ENCODE measurements at regions of chr6 and their contacts with region 1.

Region 1: DNA sequence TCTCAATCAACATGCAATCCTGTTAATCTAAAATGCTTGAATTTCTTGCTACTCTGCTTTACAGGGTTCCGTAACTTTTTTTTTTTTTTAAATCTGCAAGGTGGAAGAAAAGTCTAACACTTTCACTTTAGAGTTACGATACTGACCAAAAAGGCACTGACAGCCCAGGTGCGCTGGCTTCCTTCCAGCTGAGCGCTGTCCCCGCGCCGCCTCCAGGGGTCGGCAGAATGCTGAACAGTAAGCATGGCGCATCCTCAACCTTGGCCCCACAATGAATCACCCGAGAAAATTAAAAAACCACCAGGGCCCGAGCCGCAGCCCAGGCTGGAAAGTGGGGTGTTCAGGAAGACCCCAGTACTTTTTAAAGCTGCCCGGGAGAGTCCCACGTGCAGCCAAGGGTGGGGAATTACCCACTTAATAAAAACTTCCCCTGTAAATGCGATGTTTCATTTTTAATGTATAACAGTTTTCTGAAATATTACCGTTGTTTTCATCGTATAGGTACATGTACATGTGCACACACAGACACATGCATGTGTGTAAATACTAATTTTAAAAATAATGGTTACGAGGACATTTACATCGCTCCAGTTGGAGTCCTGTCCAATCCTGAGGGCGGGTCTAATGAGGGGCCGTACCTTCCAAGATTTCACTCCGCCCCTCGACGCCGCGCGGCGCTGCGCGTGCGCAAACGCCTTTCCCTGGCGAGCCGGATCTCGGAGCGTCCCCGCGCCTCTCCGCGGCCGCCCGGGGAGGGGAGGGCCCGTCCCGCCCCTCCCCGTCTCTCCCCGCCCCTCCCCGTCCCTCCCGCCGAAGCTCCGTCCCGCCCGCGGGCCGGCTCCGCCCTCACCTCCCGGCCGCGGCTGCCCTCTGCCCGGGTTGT is at the start of gene GINM1:
- DNase-seq: peak; percentile 93 to 97
- ATAC-seq: peak; percentile 96 to 98 (median 98)
- H3K4me3 ChIP-seq: peak within 1 kb of the TSS; percentile 80 to 100 (median 98)
- H3K27ac ChIP-seq: peak within 1 kb of the TSS; percentile 44 to 97 (median 95)
- H3K4me1 ChIP-seq: peaks cover 0 to 35% (median 20%) of the 10 kb centered on the region in 9 donors
- H3K27me3 ChIP-seq: no peaks in the 10 kb centered on the region
- CTCF ChIP-seq: peak in 8 of 9 donors; percentile 41 to 81 (median 64)
- total RNA-seq, gene GINM1: 48.6 to 59.3 (median 55.7) TPM

Region 2: DNA sequence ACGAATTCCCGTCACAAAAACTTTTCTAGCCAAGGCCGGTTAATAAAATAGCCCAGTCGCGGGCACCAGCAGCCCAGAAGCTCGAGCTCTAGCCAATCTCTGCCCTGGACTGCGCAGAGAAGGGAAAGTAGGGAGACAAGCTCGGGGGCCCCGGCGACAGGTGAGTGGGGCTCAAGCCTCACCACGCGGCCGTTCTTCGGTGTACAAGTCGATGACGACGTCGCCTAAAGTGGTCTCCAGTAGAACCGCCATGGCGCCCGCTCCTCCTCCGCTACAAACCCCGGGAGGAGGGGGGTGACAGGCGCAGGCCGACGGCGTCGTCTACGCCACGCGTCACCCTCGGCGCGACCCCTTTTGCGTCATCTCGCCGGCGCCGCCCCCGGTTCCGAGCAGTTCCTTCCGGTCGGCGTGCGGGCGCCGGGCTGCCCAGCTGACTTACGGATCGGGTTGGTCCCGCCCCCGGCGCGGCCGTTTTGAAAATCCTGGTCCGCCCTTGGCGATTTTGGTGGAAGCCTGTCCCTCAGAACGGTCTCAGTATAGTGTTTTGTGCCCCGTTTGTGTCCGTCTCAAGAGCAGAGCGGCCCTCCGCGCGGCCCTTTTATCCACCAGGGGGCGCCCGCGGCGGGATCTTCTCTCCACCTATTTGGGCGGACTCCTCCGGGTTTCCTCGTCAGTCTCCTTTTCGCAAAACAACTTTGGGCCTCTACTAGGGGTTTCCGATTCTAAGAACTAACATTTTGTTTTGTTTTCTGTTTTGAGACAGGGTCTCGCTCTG is 19.8 kb before region 1 on chr6 and contains the start of gene PPIL4:
- intact Hi-C with region 1: loop called in 1 of 10 experiments (anchors 1 kb)
- DNase-seq: peak; percentile 96 to 98
- ATAC-seq: peak; percentile 98 to 99 (median 99)
- H3K4me3 ChIP-seq: peak within 1 kb of the TSS; percentile 65 to 98 (median 86)
- H3K27ac ChIP-seq: peak within 1 kb of the TSS; percentile 84 to 99 (median 95)
- H3K4me1 ChIP-seq: peaks cover 6 to 39% (median 33%) of the 10 kb centered on the region in 9 donors
- H3K27me3 ChIP-seq: peaks cover 0 to 3% (median 0%) of the 10 kb centered on the region in 7 donors
- CTCF ChIP-seq: peak; percentile 66 to 91 (median 82)
- total RNA-seq, gene PPIL4: 15.2 to 22.0 (median 18.1) TPM

Region 3: GRCh38 chr6:149648148-149649145 is 82.7 kb after region 1 on chr6 and contains the start of gene KATNA1:
- intact Hi-C with region 1: loop called in 1 of 10 experiments (anchors 5 kb)
- DNase-seq: peak; percentile 85 to 91
- ATAC-seq: peak; percentile 97 to 99 (median 98)
- H3K4me3 ChIP-seq: peak within 1 kb of the TSS; percentile 76 to 95 (median 86)
- H3K27ac ChIP-seq: peak within 1 kb of the TSS; percentile 19 to 93 (median 87)
- H3K4me1 ChIP-seq: peaks cover 0 to 28% (median 18%) of the 10 kb centered on the region in 9 donors
- H3K27me3 ChIP-seq: no peaks in the 10 kb centered on the region
- CTCF ChIP-seq: peak in 4 of 9 donors; percentile 9 to 21 (median 18)
- total RNA-seq, gene KATNA1: 9.4 to 14.2 (median 12.0) TPM